ENCODE measurements at regions of chr12 and their contacts with region 1.

Region 1: GRCh38 chr12:56158029-56158925 is at the start of gene MYL6:
- DNase-seq: peak; percentile 93 to 98 (median 97)
- H3K4me3 ChIP-seq: peak within 1 kb of the TSS; percentile 97
- H3K27ac ChIP-seq: peak within 1 kb of the TSS; percentile 82 to 91
- H3K4me1 ChIP-seq: peaks cover 3% of the 10 kb centered on the region
- H3K27me3 ChIP-seq: no peaks in the 10 kb centered on the region
- CTCF ChIP-seq: peak in 2 of 3 donors; percentile 4 to 9
- EP300 ChIP-seq: no peak
- POLR2A ChIP-seq: peak; percentile 100
- total RNA-seq, gene MYL6: 782 to 1,485 (median 1,329) TPM

Region 2: DNA sequence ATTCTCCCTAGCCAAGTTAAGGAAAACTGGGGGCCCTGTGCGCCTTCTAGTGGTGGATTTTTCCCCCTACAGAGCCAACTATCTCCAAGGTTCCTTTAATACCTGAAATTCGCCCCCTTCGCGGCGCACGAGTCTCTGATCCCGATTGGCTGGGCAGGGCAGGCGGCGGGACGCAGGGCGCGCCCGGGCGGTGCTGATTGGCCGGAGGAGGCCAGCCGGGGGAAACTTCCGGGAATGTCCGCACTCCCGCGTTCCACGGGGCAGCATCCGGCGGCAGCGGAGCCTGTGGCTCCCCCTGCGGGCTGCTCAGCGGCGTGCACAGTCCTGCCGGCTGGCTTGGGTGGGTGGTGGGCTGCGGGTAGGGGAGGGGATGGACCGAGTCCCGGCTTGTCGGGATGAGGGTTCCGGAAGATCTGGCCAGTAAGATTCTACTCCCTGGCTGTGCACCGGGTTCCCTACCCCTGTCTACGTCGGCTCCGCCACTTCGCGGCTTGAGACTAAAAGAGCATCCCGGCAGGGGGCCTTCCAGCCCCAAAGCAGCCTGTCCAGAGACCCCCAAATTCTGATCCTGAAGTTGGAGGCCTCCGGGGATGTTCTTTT is 65.9 kb after region 1 on chr12 and contains the start of gene NABP2:
- intact Hi-C with region 1: loop called in 2 of 4 experiments (anchors 2 to 5 kb)
- DNase-seq: peak; percentile 97 to 99 (median 98)
- H3K4me3 ChIP-seq: peak within 1 kb of the TSS; percentile 68
- H3K27ac ChIP-seq: peak within 1 kb of the TSS; percentile 73 to 75
- H3K4me1 ChIP-seq: peaks cover 5% of the 10 kb centered on the region
- H3K27me3 ChIP-seq: no peaks in the 10 kb centered on the region
- CTCF ChIP-seq: peak; percentile 84 to 98 (median 98)
- EP300 ChIP-seq: peak; percentile 54
- POLR2A ChIP-seq: peak; percentile 36
- total RNA-seq, gene NABP2: 19.8 to 43.7 (median 28.9) TPM

Region 3: GRCh38 chr12:56510786-56511185 is 352.5 kb after region 1 on chr12:
- intact Hi-C with region 1: no loop called
- DNase-seq: no peak
- H3K4me3 ChIP-seq: no peak overlapping the region
- H3K27ac ChIP-seq: no peak overlapping the region
- H3K4me1 ChIP-seq: peaks cover 1% of the 10 kb centered on the region
- H3K27me3 ChIP-seq: no peaks in the 10 kb centered on the region
- CTCF ChIP-seq: no peak
- EP300 ChIP-seq: no peak
- POLR2A ChIP-seq: no peak

Measured in ovary (tissue), 10 donors.